A673 (cell line): ENCODE measurements at regions of chr4 and their contacts with region 1.

Region 1: DNA sequence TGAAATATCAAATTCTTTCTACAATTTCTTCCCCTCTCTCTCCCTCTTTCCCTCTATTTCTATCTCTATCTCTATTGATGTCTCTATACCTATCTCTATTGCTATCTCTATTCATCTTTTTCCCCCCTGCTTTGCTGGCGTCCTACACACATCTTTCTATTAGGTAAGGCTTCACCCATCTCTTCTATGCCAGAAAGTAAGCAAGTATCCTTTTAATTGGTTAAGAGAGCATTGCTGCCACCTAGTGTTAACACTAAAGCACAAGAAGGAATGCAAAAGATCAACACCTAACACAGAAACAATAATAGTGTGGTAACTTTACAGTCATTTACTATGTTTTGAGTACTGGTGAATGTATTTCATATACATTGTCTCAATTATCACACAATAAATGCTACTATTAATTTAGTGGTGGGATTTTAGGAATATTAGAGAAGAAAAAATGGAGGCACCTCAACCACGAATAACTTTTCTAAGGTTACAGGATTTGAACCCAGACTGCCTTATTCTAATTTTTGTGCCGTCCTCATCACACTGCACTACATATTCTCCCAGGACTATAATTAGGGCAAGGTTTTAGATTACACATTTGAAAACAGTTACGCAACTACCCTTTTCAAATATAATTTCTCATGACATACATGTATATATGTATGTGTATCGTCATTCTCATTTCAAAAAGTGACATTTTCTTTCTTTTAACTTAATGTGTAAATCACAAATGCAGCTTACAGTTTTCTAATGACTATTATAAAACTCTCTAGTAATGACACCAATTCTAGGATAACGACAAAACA is 3.7 kb upstream of the C4orf36 start:
- DNase-seq: peak; percentile 74
- H3K4me3 ChIP-seq: no peak overlapping the region
- H3K27ac ChIP-seq: no peak overlapping the region
- H3K4me1 ChIP-seq: peaks cover 12% of the 10 kb centered on the region
- H3K27me3 ChIP-seq: no peaks in the 10 kb centered on the region
- CTCF ChIP-seq: peak; percentile 65

Region 2: GRCh38 chr4:86497980-86498862 is 397.7 kb before region 1 on chr4:
- CTCF ChIA-PET with region 1: interaction called, 4 read pairs
- POLR2A ChIA-PET with region 1: no interaction called
- intact Hi-C with region 1: loop called (anchors 1 kb)
- DNase-seq: peak; percentile 77
- H3K4me3 ChIP-seq: no peak overlapping the region
- H3K27ac ChIP-seq: peak overlapping the region; percentile 83
- H3K4me1 ChIP-seq: peaks cover 58% of the 10 kb centered on the region
- H3K27me3 ChIP-seq: no peaks in the 10 kb centered on the region
- CTCF ChIP-seq: peak; percentile 73

Region 3: GRCh38 chr4:87224141-87224923 is 328.4 kb after region 1 on chr4:
- CTCF ChIA-PET with region 1: no interaction called
- POLR2A ChIA-PET with region 1: no interaction called
- intact Hi-C with region 1: no loop called
- DNase-seq: no peak
- H3K4me3 ChIP-seq: no peak overlapping the region
- H3K27ac ChIP-seq: no peak overlapping the region
- H3K4me1 ChIP-seq: no peaks in the 10 kb centered on the region
- H3K27me3 ChIP-seq: no peaks in the 10 kb centered on the region
- CTCF ChIP-seq: no peak